Activated naive CD4-positive, alpha-beta T cell treated with anti-CD3 and anti-CD28 coated beads, Interleukin-2, amount 10 ng/mL, durations not matched to agents 7 days and 5 days (primary cell): ENCODE measurements at regions of chr20 and their contacts with region 1.

Region 1: DNA sequence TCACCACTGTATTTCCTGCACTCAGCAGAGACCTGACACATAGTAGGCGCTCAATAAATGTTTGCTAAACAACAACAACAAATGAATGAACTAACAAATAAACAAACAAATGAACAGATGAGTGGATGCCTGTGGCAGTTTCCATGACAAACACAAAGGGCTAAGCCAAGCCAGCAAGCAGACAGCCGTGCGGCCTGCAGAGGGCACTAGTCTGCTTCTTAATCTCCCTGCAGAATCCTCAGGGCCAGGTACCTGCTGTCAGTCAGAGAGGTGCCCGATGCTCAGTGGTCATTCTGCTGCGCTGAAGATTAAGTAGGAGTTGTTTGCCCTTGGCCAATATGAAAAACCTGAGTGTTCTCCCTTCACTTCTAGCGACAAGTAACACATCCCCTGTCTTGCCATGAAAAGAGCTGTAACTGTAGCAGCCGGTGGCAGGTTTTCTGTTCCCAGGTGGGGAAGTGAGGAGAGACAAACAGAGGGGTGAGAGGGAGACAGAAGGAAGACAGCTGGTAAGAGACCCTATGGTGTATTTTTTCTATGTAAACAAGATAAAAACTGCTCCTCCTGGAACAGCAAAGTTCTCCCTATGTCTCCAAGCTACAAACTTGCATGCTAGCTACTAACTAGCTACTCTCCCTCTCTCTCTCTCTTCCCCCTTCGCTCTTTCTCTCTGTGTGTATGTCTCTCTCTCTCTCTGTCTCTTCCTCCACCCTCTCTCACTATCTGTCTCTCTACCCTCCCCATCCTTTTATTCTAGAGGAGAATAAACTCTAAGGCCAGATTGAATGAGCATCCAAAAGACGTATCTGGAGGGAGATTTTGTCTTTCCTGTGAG is at the start of gene MC3R:
- DNase-seq: peak; percentile 58
- H3K4me3 Mint-ChIP-seq: no peak within 1 kb of the TSS
- H3K27ac Mint-ChIP-seq: no peak within 1 kb of the TSS
- H3K4me1 Mint-ChIP-seq: no peaks in the 10 kb centered on the region
- H3K27me3 Mint-ChIP-seq: peaks cover 21% of the 10 kb centered on the region

Region 2: DNA sequence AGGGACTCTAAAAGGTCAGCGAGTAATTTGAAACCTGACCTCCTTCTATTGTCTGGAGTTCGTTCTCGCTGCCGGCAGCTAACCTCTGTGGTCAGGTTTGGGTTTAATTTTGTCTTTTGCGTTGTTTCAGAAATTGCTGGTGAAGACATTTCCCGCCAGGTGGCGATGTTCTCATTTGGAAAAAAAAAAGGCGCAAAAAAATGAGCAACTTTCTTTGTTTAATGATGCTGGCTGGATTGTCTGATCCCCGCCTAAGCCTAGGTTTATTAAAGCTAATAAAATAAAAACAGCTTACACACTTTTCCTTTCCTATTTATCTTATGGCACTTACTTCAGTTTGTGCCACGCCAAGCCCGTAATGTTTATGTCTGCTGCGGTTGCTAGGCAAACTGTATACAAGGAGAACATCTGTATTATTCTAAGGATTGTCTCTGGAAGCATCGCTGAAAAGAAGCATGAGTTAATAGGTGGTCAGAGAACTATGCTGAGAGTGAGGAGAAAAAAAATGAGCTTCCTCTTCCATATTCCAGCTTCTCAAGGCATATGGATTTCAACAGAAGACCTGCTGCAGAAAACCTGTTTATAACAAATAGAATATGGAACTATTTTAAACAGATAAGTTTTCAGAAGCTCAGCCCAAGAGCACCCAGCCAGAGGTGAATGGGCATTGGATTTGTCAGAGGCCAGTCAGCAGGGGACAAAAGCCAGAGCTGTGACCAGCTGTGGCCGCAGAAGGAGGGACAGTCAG is 1567.1 kb before region 1 on chr20:
- CTCF ChIA-PET with region 1: interaction called, 10 read pairs
- DNase-seq: peak; percentile 27
- H3K4me3 Mint-ChIP-seq: no peak overlapping the region
- H3K27ac Mint-ChIP-seq: no peak overlapping the region
- H3K4me1 Mint-ChIP-seq: no peaks in the 10 kb centered on the region
- H3K27me3 Mint-ChIP-seq: peaks cover 18% of the 10 kb centered on the region

Region 3: GRCh38 chr20:56004007-56004406 is 244.2 kb before region 1 on chr20:
- CTCF ChIA-PET with region 1: no interaction called
- DNase-seq: no peak
- H3K4me3 Mint-ChIP-seq: no peak overlapping the region
- H3K27ac Mint-ChIP-seq: no peak overlapping the region
- H3K4me1 Mint-ChIP-seq: no peaks in the 10 kb centered on the region
- H3K27me3 Mint-ChIP-seq: peaks cover 33% of the 10 kb centered on the region

Region 4: GRCh38 chr20:56111961-56112730 is 136.0 kb before region 1 on chr20:
- CTCF ChIA-PET with region 1: no interaction called
- DNase-seq: no peak
- H3K4me3 Mint-ChIP-seq: no peak overlapping the region
- H3K27ac Mint-ChIP-seq: no peak overlapping the region
- H3K4me1 Mint-ChIP-seq: no peaks in the 10 kb centered on the region
- H3K27me3 Mint-ChIP-seq: no peaks in the 10 kb centered on the region

Region 5: GRCh38 chr20:56229812-56230211 is 18.4 kb before region 1 on chr20:
- CTCF ChIA-PET with region 1: no interaction called
- DNase-seq: no peak
- H3K4me3 Mint-ChIP-seq: no peak overlapping the region
- H3K27ac Mint-ChIP-seq: no peak overlapping the region
- H3K4me1 Mint-ChIP-seq: no peaks in the 10 kb centered on the region
- H3K27me3 Mint-ChIP-seq: no peaks in the 10 kb centered on the region

Region 6: DNA sequence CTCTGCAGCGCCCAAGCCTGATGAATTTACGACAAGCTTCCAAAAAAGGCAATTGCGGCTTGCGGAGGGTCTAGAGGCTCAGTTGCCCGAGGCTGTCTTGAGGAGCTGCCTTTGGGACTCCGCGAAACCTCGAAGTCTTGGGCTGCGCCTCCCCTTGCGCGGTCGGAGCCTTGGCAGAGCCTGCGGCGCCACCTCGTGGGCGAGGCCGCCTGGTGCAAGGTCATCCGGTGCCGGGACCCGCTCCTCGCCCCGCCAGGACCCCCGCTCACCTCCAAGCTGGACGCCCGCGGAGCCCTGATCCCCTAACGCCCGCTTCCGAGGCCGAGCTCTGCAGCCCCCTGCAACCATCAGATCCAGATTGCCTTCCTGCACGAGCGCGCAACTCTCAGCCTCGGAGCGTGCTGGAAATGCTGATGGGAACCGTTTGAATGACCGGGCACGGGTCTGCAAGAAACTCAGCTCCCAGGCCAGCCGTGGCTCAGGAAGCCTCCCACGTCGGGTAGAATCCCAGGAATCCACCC is 95.8 kb after region 1 on chr20:
- CTCF ChIA-PET with region 1: interaction called, 25 read pairs
- DNase-seq: peak; percentile 54
- H3K4me3 Mint-ChIP-seq: no peak overlapping the region
- H3K27ac Mint-ChIP-seq: no peak overlapping the region
- H3K4me1 Mint-ChIP-seq: peaks cover 4% of the 10 kb centered on the region
- H3K27me3 Mint-ChIP-seq: peaks cover 52% of the 10 kb centered on the region